Activated CD4-positive, alpha-beta T cell treated with anti-CD3 and anti-CD28 coated beads, Interleukin-2, amount 10 ng/mL, durations not matched to agents 24 days and 14 days (primary cell): ENCODE measurements at regions of chr2 and their contacts with region 1.

Region 1: DNA sequence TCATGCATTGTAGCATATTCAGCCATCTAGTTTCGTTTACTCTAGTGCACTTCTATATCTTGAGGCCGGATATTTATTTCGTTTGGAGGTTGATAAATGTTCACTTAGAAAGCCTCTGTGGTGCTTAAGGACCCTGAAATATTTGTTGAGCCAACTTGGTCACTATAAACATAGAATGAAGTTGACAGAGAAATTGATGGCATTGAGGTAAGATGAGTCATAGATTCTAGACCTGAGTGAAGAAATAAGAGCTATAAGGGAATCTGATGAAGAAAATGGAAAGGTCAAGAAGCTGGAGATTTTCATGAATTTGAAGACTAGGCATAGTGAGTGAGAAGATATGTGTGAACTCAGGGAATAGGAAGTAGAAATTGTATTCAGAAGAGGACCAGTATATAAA is 35.9 kb downstream of the EPC2 start:
- DNase-seq: no peak
- H3K4me3 Mint-ChIP-seq: no peak overlapping the region
- H3K27ac Mint-ChIP-seq: no peak overlapping the region
- H3K4me1 Mint-ChIP-seq: peaks cover 16% of the 10 kb centered on the region
- H3K27me3 Mint-ChIP-seq: no peaks in the 10 kb centered on the region

Region 2: GRCh38 chr2:148177559-148177958 is 502.9 kb before region 1 on chr2:
- intact Hi-C with region 1: no loop called
- DNase-seq: no peak
- H3K4me3 Mint-ChIP-seq: no peak overlapping the region
- H3K27ac Mint-ChIP-seq: no peak overlapping the region
- H3K4me1 Mint-ChIP-seq: peaks cover 1% of the 10 kb centered on the region
- H3K27me3 Mint-ChIP-seq: no peaks in the 10 kb centered on the region

Region 3: GRCh38 chr2:148667113-148667836 is 13.2 kb before region 1 on chr2:
- intact Hi-C with region 1: no loop called
- DNase-seq: no peak
- H3K4me3 Mint-ChIP-seq: no peak overlapping the region
- H3K27ac Mint-ChIP-seq: no peak overlapping the region
- H3K4me1 Mint-ChIP-seq: peaks cover 40% of the 10 kb centered on the region
- H3K27me3 Mint-ChIP-seq: no peaks in the 10 kb centered on the region

Region 4: DNA sequence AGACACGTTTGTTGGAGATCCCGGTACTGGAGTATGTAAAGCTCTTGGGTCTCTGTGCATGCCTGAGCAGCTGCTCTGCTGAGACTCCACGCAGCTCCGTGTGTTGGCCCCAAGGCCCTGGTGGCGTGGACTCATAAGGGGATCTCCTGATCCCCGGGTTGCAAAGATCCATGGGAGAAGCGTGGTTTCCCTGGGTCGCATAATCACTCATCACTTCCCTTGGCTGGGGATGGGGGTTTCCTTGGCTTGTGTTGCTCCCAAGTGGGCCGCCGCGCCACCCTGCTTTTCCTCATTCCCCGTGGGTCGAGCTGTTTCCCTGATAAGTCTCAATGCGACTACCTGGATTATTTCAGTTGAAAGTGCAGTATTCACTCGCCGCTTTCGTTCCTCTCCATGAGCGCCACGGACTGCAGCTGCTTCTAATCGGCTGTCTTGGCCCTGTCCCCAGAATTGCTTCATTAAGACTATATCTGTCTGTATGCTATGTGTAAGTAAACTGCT is 40.1 kb after region 1 on chr2:
- intact Hi-C with region 1: loop called (anchors 5 kb)
- DNase-seq: no peak
- H3K4me3 Mint-ChIP-seq: no peak overlapping the region
- H3K27ac Mint-ChIP-seq: peak overlapping the region; percentile 35
- H3K4me1 Mint-ChIP-seq: peaks cover 65% of the 10 kb centered on the region
- H3K27me3 Mint-ChIP-seq: no peaks in the 10 kb centered on the region